H1 (cell line): ENCODE measurements at regions of chr3 and their contacts with region 1.

Region 1: DNA sequence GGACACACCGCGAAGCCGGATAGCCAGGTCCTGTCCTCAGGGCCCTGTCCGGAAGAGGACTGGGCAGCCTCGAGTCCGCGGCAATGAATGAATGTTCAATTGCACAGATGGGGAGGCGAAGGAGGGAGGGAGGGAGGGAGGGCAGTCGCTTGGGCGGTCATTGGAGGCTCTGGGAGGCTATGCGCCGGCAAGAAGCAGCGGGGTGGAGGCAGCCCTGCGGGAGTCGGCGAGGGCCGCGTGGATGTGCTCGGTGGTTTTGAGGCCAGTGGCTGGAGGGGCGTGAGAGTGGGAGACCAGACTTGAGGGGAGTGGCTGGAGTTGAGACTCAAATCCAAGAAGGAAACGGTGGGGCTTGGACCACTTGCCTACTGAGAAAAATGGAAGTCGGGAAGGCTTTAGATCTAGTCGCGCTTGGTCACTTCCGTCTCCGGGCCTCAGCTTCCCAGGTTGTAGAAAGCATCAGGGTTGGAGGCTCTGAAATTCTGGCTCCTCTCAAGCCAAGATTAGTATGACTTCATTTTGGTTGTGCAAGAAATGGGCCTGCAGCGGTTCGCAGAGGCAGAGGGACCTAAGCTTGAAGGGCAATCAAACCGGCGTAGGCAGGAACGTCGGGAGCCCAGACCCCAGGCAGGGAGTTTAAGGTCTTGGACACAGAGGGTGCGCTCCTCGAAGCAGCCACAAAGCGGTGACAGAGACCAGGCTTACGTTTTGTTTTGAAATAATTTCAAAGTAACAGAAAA is 21.1 kb upstream of the PLXND1 start:
- DNase-seq: peak in 1 of 2 experiments; percentile 80
- H3K4me3 ChIP-seq: peak overlapping the region; percentile 61 to 85 (median 78)
- H3K27ac ChIP-seq: peak overlapping the region; percentile 8; the same call in 1 of the 2 replicates
- H3K4me1 ChIP-seq: peaks cover 3 to 9% (median 5%) of the 10 kb centered on the region in 4 experiments
- H3K27me3 ChIP-seq: no peaks in the 10 kb centered on the region
- CTCF ChIP-seq: peak in 2 of 3 experiments; percentile 86 to 92; a peak in 3 of 4 replicates
- EP300 ChIP-seq: no peak
- POLR2A ChIP-seq: peak in 1 of 2 experiments; percentile 66; a peak in 2 of 3 replicates
- RAD21 ChIP-seq: peak; percentile 98 to 99

Region 2: DNA sequence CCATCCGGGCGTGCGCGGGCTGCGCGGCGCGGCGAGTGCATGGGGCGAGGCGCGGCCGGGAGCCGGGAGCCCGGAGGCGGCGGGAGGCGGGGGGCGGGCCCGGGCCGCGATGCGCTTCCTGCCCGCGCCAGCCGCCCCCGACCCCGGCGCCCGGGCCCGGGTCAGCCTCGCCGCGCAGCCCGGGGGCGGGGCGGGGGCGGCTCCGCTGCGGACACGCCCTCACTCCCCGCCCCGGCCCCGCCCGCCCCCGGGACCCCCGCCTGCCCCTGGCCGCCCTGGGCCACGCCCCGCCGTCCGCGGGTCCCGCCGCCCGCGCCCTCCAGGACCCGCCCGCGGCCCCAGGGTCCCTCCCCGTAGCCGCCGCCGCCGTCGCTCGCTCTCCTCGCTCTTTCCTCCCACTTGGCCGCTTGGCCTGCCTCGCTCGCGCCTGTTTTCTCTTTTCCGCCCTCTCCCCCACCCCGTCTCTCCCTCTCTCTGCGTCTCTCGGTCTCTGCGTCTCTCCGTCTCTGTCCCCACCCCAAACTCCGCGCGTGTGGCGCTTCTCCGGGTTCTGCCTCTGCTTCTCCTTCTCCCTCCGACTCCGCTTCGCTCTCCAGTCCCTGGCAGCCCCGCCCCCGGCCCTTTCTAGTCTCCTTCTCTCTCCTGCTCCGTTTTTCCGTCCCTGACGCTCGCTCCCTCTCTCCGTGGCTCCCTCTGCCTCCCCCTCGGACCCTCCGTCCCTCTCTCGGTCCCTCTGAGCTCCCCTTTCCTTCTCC is 20.8 kb before region 1 on chr3 and contains the start of gene PLXND1:
- CTCF ChIA-PET with region 1: interaction called, 7 read pairs
- POLR2A ChIA-PET with region 1: interaction called, 16 read pairs
- DNase-seq: peak in 1 of 2 experiments; percentile 78
- H3K4me3 ChIP-seq: peak within 1 kb of the TSS; percentile 46 to 76 (median 62)
- H3K27ac ChIP-seq: no peak within 1 kb of the TSS
- H3K4me1 ChIP-seq: peaks cover 4 to 52% (median 43%) of the 10 kb centered on the region in 4 experiments
- H3K27me3 ChIP-seq: peaks cover 7 to 31% (median 22%) of the 10 kb centered on the region in 4 experiments; a peak in 6 of 7 replicates
- CTCF ChIP-seq: no peak
- EP300 ChIP-seq: no peak
- POLR2A ChIP-seq: no peak
- RAD21 ChIP-seq: no peak
- total RNA-seq, gene PLXND1: 60.2 and 66.4 TPM in 2 replicates

Region 3: DNA sequence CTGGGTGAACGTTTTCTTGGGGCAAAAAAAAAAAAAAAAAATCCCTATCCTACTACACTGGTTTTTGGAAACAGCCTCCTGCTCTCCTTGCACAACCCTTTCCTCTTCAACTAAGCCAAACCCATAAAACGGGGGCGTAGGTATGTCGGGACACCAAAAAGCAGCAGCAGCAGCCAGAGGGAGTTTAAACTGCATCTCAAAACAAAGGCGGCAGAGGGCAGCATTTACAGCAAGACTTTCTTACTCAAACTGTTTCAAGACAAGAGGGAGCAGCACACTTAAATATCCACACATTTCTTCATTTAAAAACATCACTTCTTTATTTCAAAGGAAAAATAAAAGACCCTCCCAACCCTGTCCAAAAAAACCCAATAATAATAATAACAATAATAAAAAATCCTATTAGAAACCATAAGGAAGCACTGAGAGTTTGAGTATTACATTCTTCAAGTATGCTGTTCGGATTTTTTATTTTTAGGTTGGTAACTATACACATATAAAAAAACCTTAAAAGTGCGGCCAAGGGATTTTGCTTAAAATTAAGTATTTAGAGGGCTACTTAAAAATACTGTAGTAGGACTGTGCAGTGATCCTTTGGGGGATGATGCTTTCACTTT is 22.8 kb after region 1 on chr3:
- CTCF ChIA-PET with region 1: interaction called, 15 read pairs
- POLR2A ChIA-PET with region 1: no interaction called
- DNase-seq: peak in 1 of 2 experiments; percentile 84
- H3K4me3 ChIP-seq: no peak overlapping the region
- H3K27ac ChIP-seq: no peak overlapping the region
- H3K4me1 ChIP-seq: peaks cover 0 to 4% (median 2%) of the 10 kb centered on the region in 4 experiments; a peak in 3 of 7 replicates
- H3K27me3 ChIP-seq: no peaks in the 10 kb centered on the region
- CTCF ChIP-seq: peak; percentile 39 to 91 (median 75)
- EP300 ChIP-seq: no peak
- POLR2A ChIP-seq: no peak
- RAD21 ChIP-seq: peak; percentile 89 to 94

Region 4: DNA sequence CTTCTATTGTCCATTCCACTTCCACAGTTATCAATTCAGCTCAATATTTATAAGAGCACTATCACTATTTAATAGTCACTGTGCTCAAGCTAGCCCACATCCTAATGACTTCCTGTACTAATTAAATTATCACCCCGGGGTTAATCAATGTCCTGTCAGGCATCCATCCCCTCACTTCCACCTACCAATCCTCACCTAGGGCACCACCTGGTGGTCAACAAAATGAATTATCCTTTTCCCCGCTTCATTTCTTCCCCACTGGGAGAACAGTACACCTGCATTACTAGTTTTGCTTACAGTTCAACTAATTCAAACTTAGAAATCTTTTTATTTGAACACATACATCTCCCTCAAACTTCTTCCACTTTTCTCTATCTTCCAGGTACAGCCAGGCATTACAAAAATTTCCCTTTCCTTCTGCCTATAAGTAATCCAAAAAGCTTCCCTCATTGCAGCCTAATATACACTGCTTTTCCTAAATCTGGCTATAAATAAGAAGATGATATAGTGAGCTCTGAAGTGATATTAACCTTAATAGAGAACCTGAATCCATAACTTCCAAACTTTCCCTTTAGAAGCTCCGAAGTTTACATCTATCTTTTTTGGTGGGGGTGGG is 197.4 kb after region 1 on chr3:
- CTCF ChIA-PET with region 1: interaction called, 149 read pairs
- POLR2A ChIA-PET with region 1: interaction called, 4 read pairs
- DNase-seq: peak in 1 of 2 experiments; percentile 61
- H3K4me3 ChIP-seq: no peak overlapping the region
- H3K27ac ChIP-seq: no peak overlapping the region
- H3K4me1 ChIP-seq: no peaks in the 10 kb centered on the region
- H3K27me3 ChIP-seq: no peaks in the 10 kb centered on the region
- CTCF ChIP-seq: peak; percentile 46 to 74 (median 73)
- EP300 ChIP-seq: no peak
- POLR2A ChIP-seq: no peak
- RAD21 ChIP-seq: peak; percentile 89 to 91

Region 5: DNA sequence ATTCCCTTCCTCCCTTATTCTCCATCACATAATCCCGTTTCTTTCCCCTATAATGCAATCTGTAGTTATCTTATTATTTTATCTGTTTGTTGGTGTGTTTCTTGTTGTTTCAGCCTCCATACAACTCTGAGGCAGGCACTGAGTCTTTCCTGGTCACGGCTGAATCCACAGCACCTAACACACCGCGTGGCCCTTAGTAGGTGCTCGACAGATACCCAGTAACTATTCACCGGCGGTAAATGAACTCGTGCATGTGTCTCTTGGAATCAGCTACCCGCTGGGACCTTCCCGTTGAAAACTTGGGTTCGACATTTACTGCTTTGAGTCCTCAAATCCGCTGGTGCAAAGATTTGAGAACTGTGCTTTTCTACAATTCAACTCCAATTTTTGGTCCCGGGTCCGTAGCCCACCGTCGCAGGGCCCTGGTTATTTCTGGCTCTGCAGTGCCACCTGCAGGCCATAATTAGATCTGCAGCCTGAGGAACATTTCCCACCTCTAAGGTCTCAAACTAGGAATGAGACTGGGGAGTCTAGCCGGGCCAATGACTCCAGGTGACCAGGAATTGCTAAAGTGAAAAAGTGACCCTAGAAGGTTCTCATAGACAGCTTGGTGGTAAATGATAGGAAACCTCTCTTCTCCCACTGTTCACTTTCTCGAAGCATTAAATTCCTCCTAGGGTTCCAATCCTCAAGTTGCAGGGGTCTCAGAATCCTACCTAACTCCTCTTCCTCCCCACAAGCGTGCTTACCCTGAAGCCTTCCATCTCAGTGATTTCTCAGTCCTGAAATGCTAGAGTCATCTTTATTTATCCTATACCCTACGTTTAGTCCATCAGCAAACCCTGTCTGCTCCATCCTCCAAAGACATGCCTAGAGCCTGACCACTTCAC is 306.9 kb after region 1 on chr3:
- CTCF ChIA-PET with region 1: interaction called, 12 read pairs
- POLR2A ChIA-PET with region 1: no interaction called
- DNase-seq: peak in 1 of 2 experiments; percentile 64
- H3K4me3 ChIP-seq: no peak overlapping the region; a peak in 1 of 8 replicates
- H3K27ac ChIP-seq: no peak overlapping the region
- H3K4me1 ChIP-seq: peaks cover 0 to 3% (median 0%) of the 10 kb centered on the region in 4 experiments; a peak in 2 of 7 replicates
- H3K27me3 ChIP-seq: 0 out of 7 replicates have a peak, but pooled peaks cover 0 to 5% (median under 1%) of the 10 kb centered on the region in 4 experiments
- CTCF ChIP-seq: peak; percentile 71 to 89 (median 83)
- EP300 ChIP-seq: no peak
- POLR2A ChIP-seq: no peak
- RAD21 ChIP-seq: peak; percentile 88 to 92